H1 (cell line): ENCODE measurements at regions of chr7 and their contacts with region 1.

Region 1: DNA sequence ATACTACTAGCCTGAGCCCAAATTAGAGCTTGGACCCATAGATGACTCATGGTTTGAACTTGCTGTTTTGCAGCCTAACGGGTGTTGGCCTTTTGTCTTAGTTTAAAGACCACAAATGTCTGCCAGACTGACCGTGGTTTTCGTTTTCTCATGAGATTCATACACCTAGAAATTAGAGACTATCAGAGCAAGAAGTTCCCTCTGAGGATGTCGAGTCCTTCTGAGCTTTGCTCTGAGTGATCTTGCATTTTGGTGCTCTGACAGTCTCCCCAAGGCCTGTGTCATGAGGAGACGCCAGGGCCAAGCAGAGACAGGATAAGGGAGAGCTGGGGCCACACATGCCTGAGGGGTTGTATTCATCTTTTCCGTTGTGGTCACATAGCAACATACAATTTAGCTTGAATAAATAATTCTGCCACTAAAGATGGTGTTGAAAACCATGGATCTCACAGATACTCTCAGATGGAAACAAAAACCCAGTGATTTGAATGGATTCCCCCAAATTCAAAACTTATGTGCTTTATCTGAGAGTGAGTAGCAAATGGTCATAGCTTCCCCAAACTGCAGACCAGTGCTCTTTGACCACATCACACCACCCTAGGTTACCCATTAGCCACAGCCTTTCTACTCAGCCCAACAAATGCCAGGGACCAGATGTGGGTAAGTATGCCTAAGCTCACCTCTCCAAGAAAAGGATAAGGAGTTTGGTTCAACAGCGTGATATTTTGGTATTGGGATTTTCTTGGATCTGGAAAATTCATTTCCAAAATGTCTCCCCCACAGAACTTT is 762.0 kb upstream of the IGFBP3 start:
- DNase-seq: no peak
- H3K4me3 ChIP-seq: no peak overlapping the region
- H3K27ac ChIP-seq: no peak overlapping the region
- H3K4me1 ChIP-seq: no peaks in the 10 kb centered on the region; a peak in 1 of 7 replicates
- H3K27me3 ChIP-seq: no peaks in the 10 kb centered on the region
- CTCF ChIP-seq: no peak
- EP300 ChIP-seq: no peak
- POLR2A ChIP-seq: no peak
- RAD21 ChIP-seq: no peak

Region 2: DNA sequence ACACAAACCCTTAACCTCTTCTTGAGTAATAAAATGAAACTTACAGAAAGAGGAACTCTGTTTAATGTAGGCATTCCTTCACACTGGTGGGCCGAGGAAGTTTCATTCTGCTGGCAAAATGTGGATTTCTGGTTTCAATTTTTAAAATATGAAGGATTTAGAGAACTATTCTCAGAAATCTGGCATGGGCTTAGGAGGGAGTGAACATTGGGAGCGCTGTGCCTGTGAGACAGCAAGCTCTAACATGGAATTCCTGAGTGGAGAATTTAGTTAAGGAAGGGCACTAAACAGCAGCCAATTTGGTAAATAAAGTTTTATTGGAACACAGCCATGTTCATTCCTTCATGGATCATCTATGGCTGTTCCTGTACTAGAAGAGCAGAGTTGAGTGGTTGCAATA is 10.2 kb before region 1 on chr7:
- CTCF ChIA-PET with region 1: interaction called, 12 read pairs
- POLR2A ChIA-PET with region 1: no interaction called
- DNase-seq: no peak
- H3K4me3 ChIP-seq: no peak overlapping the region
- H3K27ac ChIP-seq: no peak overlapping the region
- H3K4me1 ChIP-seq: peaks cover 0 to 8% (median 3%) of the 10 kb centered on the region in 4 experiments; a peak in 4 of 7 replicates
- H3K27me3 ChIP-seq: no peaks in the 10 kb centered on the region
- CTCF ChIP-seq: no peak
- EP300 ChIP-seq: no peak
- POLR2A ChIP-seq: no peak
- RAD21 ChIP-seq: no peak

Region 3: DNA sequence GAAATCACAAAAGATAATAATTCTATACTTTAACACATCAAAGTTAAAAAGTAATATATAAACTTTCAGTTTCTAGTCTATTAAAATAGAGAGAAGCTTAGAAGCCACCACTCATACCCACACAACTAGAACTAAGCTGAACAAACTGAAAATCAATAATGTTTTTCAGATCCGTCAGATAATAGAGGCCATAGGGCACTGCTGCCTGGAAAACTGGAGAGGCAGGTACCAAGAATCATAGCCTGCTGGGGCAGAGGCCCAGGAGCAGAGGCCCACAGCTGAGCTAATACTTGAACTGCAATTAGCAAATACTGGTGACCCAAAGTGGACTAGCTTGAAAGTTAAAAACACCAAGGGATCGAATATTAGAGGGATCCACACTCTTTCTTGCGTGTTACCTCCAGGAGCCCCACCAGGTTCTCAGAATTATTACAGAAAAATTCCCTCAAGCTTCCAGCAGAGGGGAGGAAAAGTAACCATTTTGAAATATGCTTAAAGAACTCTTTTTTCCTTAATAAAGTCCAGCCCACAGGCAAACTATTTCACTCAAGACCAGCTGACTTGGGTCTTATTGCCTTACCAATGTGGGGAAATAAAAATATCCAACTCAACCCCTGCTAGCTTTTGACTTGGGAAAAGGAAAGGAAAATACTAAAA is 12.1 kb after region 1 on chr7:
- CTCF ChIA-PET with region 1: interaction called, 22 read pairs
- POLR2A ChIA-PET with region 1: interaction called, 3 read pairs
- DNase-seq: no peak
- H3K4me3 ChIP-seq: no peak overlapping the region
- H3K27ac ChIP-seq: no peak overlapping the region
- H3K4me1 ChIP-seq: no peaks in the 10 kb centered on the region
- H3K27me3 ChIP-seq: no peaks in the 10 kb centered on the region
- CTCF ChIP-seq: no peak
- EP300 ChIP-seq: no peak
- POLR2A ChIP-seq: no peak
- RAD21 ChIP-seq: no peak